Posterior vena cava (tissue), 2 donors: ENCODE measurements at regions of chr3 and their contacts with region 1.

Region 1: DNA sequence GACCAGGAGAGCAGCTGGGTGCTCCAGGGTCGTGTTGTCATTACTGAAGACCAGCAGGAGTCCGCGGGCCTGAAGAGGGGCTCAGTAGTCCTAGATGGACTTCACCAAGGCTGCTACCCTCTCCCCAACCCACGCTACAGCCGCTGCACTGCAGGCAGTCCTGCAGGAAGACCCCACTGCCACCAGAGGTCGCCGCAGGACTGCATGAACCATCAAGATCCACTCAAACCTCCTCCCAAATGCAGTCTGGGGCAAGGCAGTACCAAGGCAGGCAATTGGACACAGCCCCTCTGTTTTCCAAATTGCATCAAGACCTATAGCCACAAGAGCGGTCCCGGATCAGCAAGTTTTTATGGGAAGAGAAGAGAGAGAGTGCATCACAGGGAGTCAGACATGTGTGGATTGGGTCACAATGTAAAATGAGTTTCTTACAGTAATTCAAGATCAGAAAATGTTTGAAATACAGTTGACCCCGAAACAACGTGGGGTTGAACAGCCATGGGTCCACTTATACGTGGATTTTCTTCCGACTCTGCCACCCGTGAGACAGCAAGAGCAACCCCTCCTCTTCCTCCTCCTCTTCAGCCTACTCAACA is 46.7 kb downstream of the DZIP1L start:
- DNase-seq: peak; percentile 93

Region 2: DNA sequence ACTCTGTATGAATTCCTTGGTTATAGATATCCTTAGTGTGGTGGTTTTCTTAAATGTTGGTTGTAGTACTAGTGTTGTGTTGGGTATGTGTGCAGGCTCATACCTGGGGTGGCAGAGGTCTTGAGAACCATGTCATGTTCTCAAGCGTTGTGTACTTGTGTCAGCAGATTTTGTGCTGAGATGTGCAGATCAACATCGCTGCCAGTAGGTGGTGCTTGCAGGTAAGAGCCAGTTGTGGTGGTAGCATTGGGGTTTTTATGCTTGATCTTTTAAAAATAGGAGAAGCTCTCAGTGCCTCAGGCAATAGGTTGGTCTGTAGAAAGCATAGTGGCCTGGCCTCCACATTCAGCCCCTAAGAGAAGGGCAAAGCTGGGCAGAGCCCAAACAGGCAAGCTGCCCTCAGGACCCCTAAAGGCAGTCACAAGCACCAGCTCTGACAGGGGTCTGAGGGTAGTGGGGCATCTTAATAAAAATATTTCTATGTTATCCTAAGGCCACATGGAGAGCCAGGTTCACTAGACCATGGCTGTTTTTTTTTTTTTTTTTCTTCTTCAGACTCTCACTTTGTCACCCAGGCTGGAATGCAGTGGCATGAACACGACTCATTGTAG is 946.9 kb before region 1 on chr3:
- intact Hi-C with region 1: no loop called
- DNase-seq: no peak

Region 3: GRCh38 chr3:138118612-138119422 is 50.1 kb after region 1 on chr3:
- intact Hi-C with region 1: loop called (anchors 2 to 5 kb)
- DNase-seq: peak; percentile 88

Region 4: GRCh38 chr3:138124706-138125355 is 56.2 kb after region 1 on chr3:
- intact Hi-C with region 1: loop called in 1 of 2 experiments (anchors 5 kb)
- DNase-seq: no peak

Region 5: DNA sequence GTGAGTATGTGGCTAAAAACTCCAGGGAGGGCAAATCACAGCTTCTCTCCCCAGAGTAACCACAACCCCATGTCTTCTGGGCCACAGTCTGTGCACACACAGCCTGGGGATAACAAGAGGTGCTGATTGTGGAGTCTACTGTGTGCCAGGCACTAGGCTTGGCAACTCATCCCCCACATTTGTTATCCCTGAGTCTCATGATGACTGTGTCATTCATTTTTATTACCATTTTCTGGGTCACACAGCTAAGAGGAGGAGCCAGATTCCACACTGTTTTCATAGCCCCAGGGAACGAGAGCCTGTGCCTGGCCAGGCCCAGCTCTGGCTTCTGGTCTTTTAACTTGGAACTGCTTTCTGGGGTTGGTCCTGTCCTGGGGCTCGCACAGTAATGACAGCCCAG is 400.2 kb after region 1 on chr3:
- intact Hi-C with region 1: no loop called
- DNase-seq: no peak